Caco-2 (cell line): ENCODE measurements at regions of chr6 and their contacts with region 1.

Region 1: GRCh38 chr6:22248513-22249308 is 48.1 kb downstream of the PRL start:
- DNase-seq: peak; percentile 48 to 65
- H3K4me3 ChIP-seq: no peak overlapping the region
- H3K4me3 Mint-ChIP-seq: no peak overlapping the region
- H3K27ac Mint-ChIP-seq: peak overlapping the region; percentile 77
- H3K4me1 ChIP-seq: peaks cover 46% of the 10 kb centered on the region
- H3K4me1 Mint-ChIP-seq: peaks cover 31% of the 10 kb centered on the region
- H3K27me3 ChIP-seq: no peaks in the 10 kb centered on the region
- H3K27me3 Mint-ChIP-seq: no peaks in the 10 kb centered on the region
- CTCF ChIP-seq: no peak

Region 2: GRCh38 chr6:21846541-21847451 is 401.9 kb before region 1 on chr6:
- CTCF ChIA-PET with region 1: no interaction called
- POLR2A ChIA-PET with region 1: no interaction called
- intact Hi-C with region 1: no loop called
- DNase-seq: peak; percentile 62 to 83
- H3K4me3 ChIP-seq: no peak overlapping the region
- H3K4me3 Mint-ChIP-seq: peak overlapping the region; percentile 37
- H3K27ac Mint-ChIP-seq: no peak overlapping the region
- H3K4me1 ChIP-seq: peaks cover 23% of the 10 kb centered on the region
- H3K4me1 Mint-ChIP-seq: peaks cover 20% of the 10 kb centered on the region
- H3K27me3 ChIP-seq: no peaks in the 10 kb centered on the region
- H3K27me3 Mint-ChIP-seq: no peaks in the 10 kb centered on the region
- CTCF ChIP-seq: no peak

Region 3: DNA sequence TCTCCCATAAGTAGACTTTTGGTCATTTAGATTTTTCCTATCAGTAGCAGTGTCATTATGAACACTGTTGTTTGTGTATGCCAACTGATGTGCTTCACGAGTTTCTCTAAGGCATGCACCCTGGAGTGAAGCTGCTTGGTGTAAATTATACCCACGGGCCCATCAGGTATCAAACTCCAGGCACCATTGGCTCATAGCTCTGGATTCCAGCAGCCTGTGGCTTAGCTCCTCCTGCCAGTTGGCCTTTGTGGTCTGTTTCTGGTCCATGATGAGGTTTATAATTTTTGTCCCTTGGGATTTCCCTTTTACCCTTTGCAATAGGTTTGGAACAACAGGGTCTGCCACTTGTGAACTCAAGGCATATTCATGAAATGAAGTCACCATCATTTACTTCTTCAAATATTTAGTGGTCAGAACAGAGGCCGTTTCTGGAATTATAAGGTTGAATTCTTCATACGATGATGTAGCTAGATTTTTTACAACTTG is 302.4 kb before region 1 on chr6:
- CTCF ChIA-PET with region 1: no interaction called
- POLR2A ChIA-PET with region 1: no interaction called
- intact Hi-C with region 1: loop called (anchors 1 kb)
- DNase-seq: no peak
- H3K4me3 ChIP-seq: no peak overlapping the region
- H3K4me3 Mint-ChIP-seq: no peak overlapping the region
- H3K27ac Mint-ChIP-seq: peak overlapping the region; percentile 87
- H3K4me1 ChIP-seq: peaks cover 45% of the 10 kb centered on the region
- H3K4me1 Mint-ChIP-seq: peaks cover 28% of the 10 kb centered on the region
- H3K27me3 ChIP-seq: no peaks in the 10 kb centered on the region
- H3K27me3 Mint-ChIP-seq: no peaks in the 10 kb centered on the region
- CTCF ChIP-seq: no peak

Region 4: GRCh38 chr6:22363714-22364239 is 115.1 kb after region 1 on chr6:
- CTCF ChIA-PET with region 1: no interaction called
- POLR2A ChIA-PET with region 1: no interaction called
- intact Hi-C with region 1: loop called (anchors 5 kb)
- DNase-seq: no peak
- H3K4me3 ChIP-seq: no peak overlapping the region
- H3K4me3 Mint-ChIP-seq: peak overlapping the region; percentile 7
- H3K27ac Mint-ChIP-seq: peak overlapping the region; percentile 46
- H3K4me1 ChIP-seq: peaks cover 7% of the 10 kb centered on the region
- H3K4me1 Mint-ChIP-seq: peaks cover 21% of the 10 kb centered on the region
- H3K27me3 ChIP-seq: no peaks in the 10 kb centered on the region
- H3K27me3 Mint-ChIP-seq: no peaks in the 10 kb centered on the region
- CTCF ChIP-seq: no peak

Region 5: GRCh38 chr6:22747571-22747970 is 498.9 kb after region 1 on chr6:
- CTCF ChIA-PET with region 1: no interaction called
- POLR2A ChIA-PET with region 1: no interaction called
- intact Hi-C with region 1: loop called (anchors 5 kb)
- DNase-seq: no peak
- H3K4me3 ChIP-seq: no peak overlapping the region
- H3K4me3 Mint-ChIP-seq: no peak overlapping the region
- H3K27ac Mint-ChIP-seq: no peak overlapping the region
- H3K4me1 ChIP-seq: peaks cover 15% of the 10 kb centered on the region
- H3K4me1 Mint-ChIP-seq: peaks cover 18% of the 10 kb centered on the region
- H3K27me3 ChIP-seq: no peaks in the 10 kb centered on the region
- H3K27me3 Mint-ChIP-seq: no peaks in the 10 kb centered on the region
- CTCF ChIP-seq: no peak